ENCODE measurements at regions of chr19 and their contacts with region 1.

Region 1: GRCh38 chr19:41263850-41264580 is at the start of gene HNRNPUL1:
- DNase-seq: peak; percentile 99
- total RNA-seq, gene HNRNPUL1: 150 to 157 TPM

Region 2: DNA sequence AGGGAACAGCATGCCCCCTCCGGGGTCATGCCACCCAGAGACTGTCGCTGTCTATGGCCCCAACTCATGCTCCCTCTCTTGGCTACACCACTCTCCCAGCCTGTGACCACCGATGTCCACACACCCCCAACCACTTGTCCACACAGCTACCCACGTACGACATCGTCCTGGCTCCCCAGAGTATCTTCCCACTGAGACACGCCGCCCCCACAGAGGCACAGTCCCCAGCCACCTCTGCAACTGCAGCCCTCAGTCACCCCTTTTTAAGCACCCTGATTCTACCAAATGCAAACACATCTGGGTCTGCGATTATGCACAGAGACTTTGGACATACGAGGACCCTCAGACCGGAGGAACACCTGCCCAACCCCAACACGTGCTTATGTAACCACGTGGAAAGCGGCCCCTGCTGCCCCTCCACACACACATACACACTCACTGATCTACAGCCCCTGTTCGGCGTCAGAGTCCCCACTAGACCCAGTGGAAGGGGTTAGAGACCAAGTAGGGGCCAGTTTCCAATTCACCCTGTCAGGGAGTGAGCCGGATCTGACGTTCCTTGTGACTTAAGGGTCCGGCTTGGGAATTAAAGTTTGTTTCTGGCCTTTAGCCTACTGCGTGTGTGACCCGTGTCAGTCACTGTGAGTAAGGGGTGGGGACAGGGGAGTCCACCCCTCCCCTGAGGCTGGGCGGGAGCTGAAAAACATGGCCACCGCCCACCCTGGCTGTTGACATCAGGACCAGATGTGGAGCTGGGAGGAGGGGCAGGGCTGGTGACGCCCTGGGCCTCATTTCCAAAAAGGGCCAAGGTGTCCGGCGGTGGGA is 56.9 kb before region 1 on chr19:
- intact Hi-C with region 1: loop called (anchors 5 kb)
- DNase-seq: peak; percentile 91

Region 3: GRCh38 chr19:41218615-41219507 is 45.2 kb before region 1 on chr19 and contains the start of gene AXL:
- intact Hi-C with region 1: no loop called
- DNase-seq: peak; percentile 95
- total RNA-seq, gene AXL: 133 to 147 TPM

Region 4: GRCh38 chr19:41276231-41276630 is 12.2 kb after region 1 on chr19:
- intact Hi-C with region 1: loop called in 1 of 2 experiments (anchors 1 kb)
- DNase-seq: no peak

Region 5: GRCh38 chr19:41318669-41319499 is 54.9 kb after region 1 on chr19:
- intact Hi-C with region 1: no loop called
- DNase-seq: no peak

Region 6: DNA sequence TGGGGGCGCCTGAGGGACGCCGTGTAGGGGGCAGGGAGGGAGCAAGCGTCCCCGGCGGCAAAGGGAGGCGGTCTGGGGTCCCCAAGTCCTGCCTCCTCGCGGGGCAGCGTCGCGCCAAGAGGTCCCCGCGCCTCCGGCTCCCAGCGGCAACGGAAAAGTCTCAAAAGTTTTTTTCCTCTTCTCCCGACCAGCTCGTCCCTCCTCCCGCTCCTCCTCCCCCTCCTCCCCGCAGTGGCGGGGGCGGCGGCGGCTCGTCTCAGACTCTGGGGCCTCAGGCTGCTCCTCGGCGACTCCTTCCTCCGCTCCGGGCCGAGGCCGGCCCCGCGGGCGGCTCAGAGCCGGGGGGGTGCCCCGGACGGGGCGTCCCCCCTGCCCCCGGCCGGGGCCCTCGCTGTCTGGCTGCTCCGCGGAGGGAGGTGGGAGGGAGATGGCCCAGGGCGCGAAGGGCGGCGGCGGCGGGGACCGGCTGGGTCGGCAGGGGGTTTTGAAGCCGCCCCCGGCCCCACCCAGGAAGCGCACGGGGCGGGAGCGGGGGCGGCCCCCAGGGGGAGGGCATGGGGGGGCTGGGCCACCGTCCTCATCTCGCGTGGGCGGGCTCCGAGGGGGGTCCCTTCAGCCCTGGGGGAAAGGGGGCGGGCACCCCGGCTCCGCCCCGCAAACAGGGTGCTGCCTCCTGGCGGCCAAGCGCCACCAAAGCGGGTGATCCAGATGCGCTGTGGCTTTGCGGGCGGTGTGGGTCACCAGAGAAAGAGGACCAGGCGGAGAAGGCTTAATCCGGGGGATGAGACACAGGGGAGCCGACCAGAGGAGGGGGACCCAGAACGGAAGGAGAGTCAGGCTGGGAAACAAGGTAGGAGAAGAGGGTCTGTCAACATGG is 89.7 kb after region 1 on chr19 and contains the start of gene TGFB1:
- intact Hi-C with region 1: no loop called
- DNase-seq: peak; percentile 97
- total RNA-seq, gene TGFB1: 43.8 to 61.5 TPM